ENCODE measurements at regions of chrX and their contacts with region 1.

Region 1: DNA sequence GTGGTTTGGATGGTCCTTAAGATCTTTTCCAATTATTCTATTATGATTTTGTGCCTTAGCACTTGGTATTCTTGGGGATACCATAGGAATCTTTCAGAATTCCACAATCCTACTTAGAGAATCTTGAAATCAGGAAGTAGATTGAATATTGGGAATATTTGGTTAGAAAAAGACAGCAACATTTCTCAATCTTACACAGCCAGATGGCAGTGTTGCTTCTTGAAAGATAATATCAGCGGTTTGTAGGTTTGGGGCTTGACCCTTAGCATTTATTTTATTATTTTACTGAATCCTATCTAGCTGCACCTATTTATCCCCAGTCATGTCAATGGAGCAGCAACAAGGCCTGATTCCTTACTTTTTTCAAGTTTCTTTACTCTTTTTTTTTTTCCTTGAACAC is 28.6 kb downstream of the MAGEB1 start:
- DNase-seq: peak in 2 of 4 experiments; percentile 10 to 20
- ATAC-seq: peak; percentile 53; the same call in 2 of the 3 replicates
- H3K4me3 ChIP-seq: no peak overlapping the region
- H3K27ac ChIP-seq: no peak overlapping the region
- H3K4me1 ChIP-seq: no peaks in the 10 kb centered on the region
- H3K27me3 ChIP-seq: no peaks in the 10 kb centered on the region
- CTCF ChIP-seq: peak in 2 of 3 experiments; percentile 20 to 67; a peak in 3 of 6 replicates
- EP300 ChIP-seq: no peak
- POLR2A ChIP-seq: no peak
- RAD21 ChIP-seq: peak; percentile 65 to 79

Region 2: DNA sequence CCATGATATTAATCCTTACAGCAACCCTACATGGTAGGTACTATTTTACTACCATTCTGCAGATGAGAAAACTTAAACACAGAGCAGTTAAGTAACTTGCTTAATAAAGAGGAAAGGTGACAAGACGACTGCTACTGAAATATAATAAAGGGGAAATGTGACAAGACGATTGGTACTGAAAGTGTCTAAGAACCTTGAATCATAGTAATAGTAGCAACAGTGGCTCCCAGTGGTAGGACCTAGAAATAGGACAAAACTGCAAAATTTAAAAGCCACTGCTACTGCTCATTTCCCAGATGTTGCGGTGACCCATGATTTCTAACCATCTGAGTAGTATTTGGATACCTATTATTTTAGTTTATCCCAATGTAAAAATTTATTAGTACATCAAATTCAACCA is 212.6 kb after region 1 on chrX:
- CTCF ChIA-PET with region 1: interaction called, 13 read pairs
- POLR2A ChIA-PET with region 1: no interaction called
- in situ Hi-C with region 1: no loop called
- intact Hi-C with region 1: loop called (anchors 2 kb)
- DNase-seq: no peak
- ATAC-seq: no peak
- H3K4me3 ChIP-seq: no peak overlapping the region
- H3K27ac ChIP-seq: no peak overlapping the region
- H3K4me1 ChIP-seq: no peaks in the 10 kb centered on the region
- H3K27me3 ChIP-seq: no peaks in the 10 kb centered on the region
- CTCF ChIP-seq: peak in 2 of 3 experiments; percentile 20 to 27; a peak in 2 of 6 replicates
- EP300 ChIP-seq: no peak
- POLR2A ChIP-seq: no peak
- RAD21 ChIP-seq: peak in 1 of 2 experiments; percentile 46; a peak in 3 of 4 replicates

Region 3: GRCh38 chrX:30504309-30504708 is 228.8 kb after region 1 on chrX:
- CTCF ChIA-PET with region 1: interaction called, 23 read pairs
- POLR2A ChIA-PET with region 1: no interaction called
- in situ Hi-C with region 1: loop called (anchors 10 kb)
- intact Hi-C with region 1: loop called (anchors 1 kb)
- DNase-seq: peak; percentile 3 to 22 (median 10)
- ATAC-seq: no peak
- H3K4me3 ChIP-seq: no peak overlapping the region
- H3K27ac ChIP-seq: no peak overlapping the region
- H3K4me1 ChIP-seq: no peaks in the 10 kb centered on the region
- H3K27me3 ChIP-seq: no peaks in the 10 kb centered on the region
- CTCF ChIP-seq: peak in 2 of 3 experiments; percentile 25 to 59; a peak in 3 of 6 replicates
- EP300 ChIP-seq: no peak
- POLR2A ChIP-seq: no peak
- RAD21 ChIP-seq: peak; percentile 77 to 78

Measured in K562 (cell line).